PC-9 (cell line): ENCODE measurements at regions of chr4 and their contacts with region 1.

Region 1: DNA sequence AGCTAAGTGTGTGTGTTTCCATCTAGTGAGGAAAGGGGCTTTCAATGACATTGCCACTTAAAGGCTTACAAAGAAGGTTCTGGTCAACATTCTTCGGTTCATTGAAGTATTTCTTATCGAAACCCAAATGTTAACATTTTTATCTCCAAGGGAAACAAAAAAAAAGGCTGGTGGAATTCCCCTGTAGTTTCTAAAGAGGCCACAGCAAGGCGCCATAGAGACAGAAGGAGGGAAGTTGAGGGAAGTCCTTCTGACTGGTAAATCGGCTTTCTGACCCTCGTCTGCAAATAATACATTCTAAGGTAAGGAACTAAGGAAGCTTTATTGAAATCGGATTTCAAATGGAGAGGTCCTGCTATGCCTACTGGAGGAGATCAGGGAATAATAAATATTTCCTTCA is 1.7 kb upstream of the ZFP42 start:
- DNase-seq: peak in 1 of 2 experiments; percentile 32
- H3K4me3 ChIP-seq: no peak overlapping the region
- H3K27ac ChIP-seq: no peak overlapping the region
- H3K4me1 ChIP-seq: no peaks in the 10 kb centered on the region
- H3K27me3 ChIP-seq: no peaks in the 10 kb centered on the region
- CTCF ChIP-seq: peak; percentile 57

Region 2: GRCh38 chr4:187632260-187632995 is 361.4 kb before region 1 on chr4:
- CTCF ChIA-PET with region 1: interaction called, 11 read pairs
- POLR2A ChIA-PET with region 1: no interaction called
- intact Hi-C with region 1: no loop called
- DNase-seq: no peak
- H3K4me3 ChIP-seq: no peak overlapping the region
- H3K27ac ChIP-seq: no peak overlapping the region
- H3K4me1 ChIP-seq: no peaks in the 10 kb centered on the region
- H3K27me3 ChIP-seq: no peaks in the 10 kb centered on the region
- CTCF ChIP-seq: no peak

Region 3: DNA sequence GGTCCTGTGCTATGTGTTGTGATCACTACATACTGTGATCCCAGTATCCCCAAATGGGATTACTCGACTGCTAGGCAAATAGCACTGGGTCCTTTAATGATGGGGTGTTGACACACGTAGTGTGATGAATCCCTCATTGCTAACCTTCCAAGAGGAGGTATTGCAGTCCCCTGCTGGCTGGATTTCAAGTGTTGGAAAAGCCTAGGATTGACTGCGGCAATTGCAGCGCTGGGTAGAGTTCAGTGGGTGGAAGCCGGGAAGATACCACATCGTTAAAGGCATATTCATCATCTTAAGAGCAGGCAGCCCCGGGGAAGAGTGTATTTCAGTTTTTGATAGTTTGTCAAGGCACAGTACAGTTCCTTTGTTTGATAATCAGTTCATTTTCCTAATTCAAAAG is 305.3 kb after region 1 on chr4:
- CTCF ChIA-PET with region 1: no interaction called
- POLR2A ChIA-PET with region 1: no interaction called
- intact Hi-C with region 1: no loop called
- DNase-seq: no peak
- H3K4me3 ChIP-seq: no peak overlapping the region
- H3K27ac ChIP-seq: no peak overlapping the region
- H3K4me1 ChIP-seq: no peaks in the 10 kb centered on the region
- H3K27me3 ChIP-seq: peaks cover 19% of the 10 kb centered on the region; the same call in 1 of the 2 replicates
- CTCF ChIP-seq: no peak

Region 4: DNA sequence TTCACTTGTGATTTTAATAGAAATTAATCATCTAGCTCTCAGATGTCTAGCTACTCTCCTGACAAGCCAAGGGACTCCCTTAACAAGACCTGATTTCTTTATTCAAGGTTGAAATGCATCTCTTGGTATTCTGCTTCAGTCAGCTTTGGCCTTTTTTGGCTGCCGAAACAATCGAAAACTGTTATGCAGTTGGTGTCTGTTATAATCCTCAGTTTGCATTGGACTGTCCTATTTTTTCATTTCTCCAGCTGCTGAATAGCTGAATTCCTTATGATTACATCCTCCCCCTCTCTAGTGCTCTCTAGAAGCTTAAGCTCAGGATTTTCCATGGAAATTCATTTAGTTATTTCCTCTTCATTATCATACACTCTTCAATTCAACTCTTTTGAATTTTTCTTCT is 322.6 kb after region 1 on chr4:
- CTCF ChIA-PET with region 1: interaction called, 21 read pairs
- POLR2A ChIA-PET with region 1: no interaction called
- intact Hi-C with region 1: no loop called
- DNase-seq: no peak
- H3K4me3 ChIP-seq: no peak overlapping the region
- H3K27ac ChIP-seq: no peak overlapping the region
- H3K4me1 ChIP-seq: no peaks in the 10 kb centered on the region
- H3K27me3 ChIP-seq: no peaks in the 10 kb centered on the region
- CTCF ChIP-seq: no peak